Calu3 (cell line): ENCODE measurements at regions of chr12 and their contacts with region 1.

Region 1: DNA sequence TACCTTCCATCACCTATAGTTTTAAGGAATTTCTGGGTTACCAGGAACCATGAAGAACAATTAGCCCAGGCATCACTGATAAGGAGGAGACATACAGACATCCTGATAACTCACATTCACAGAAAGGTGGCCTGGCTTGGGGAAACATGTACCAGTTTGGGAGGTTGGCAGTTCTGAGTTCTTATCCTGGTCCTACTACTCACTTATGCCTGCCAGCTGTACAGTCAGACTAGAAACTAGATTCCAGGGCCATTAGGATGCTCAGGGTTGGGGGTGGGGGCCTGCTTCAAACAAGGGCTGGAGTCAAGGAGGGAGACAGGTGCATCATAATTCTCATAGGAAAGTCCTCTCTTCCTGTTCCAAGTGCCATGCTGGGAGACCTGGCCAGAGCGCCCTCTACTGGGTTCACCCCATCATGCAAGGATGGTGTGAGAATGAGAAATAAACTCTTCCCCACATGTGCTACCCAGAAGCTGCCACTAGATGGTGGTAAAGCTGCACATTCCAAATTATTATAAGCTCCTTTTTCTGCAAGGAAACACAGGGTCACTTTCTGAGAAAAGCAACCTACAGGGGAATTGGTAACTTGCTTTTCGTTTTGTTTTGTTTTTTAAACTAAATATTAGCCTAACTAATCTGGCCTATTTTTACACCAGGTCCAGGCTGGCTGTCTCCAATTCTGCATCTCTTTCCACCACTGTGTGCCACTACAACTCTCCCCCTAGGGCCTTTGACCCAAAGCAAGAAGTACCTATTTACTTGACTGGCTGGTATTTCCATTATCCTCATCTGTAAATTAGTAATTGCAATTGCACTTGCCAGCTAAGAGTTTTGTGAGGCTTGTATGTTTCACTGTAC is 14.5 kb downstream of the OAS2 start:
- DNase-seq: peak; percentile 67
- H3K4me3 Mint-ChIP-seq: no peak overlapping the region
- H3K27ac Mint-ChIP-seq: no peak overlapping the region
- H3K4me1 Mint-ChIP-seq: no peaks in the 10 kb centered on the region
- H3K27me3 Mint-ChIP-seq: peaks cover 20% of the 10 kb centered on the region
- CTCF ChIP-seq: peak; percentile 92

Region 2: GRCh38 chr12:112916270-112916669 is 76.5 kb before region 1 on chr12:
- CTCF ChIA-PET with region 1: no interaction called
- intact Hi-C with region 1: no loop called
- DNase-seq: no peak
- H3K4me3 Mint-ChIP-seq: no peak overlapping the region
- H3K27ac Mint-ChIP-seq: no peak overlapping the region
- H3K4me1 Mint-ChIP-seq: no peaks in the 10 kb centered on the region
- H3K27me3 Mint-ChIP-seq: no peaks in the 10 kb centered on the region
- CTCF ChIP-seq: no peak

Region 3: DNA sequence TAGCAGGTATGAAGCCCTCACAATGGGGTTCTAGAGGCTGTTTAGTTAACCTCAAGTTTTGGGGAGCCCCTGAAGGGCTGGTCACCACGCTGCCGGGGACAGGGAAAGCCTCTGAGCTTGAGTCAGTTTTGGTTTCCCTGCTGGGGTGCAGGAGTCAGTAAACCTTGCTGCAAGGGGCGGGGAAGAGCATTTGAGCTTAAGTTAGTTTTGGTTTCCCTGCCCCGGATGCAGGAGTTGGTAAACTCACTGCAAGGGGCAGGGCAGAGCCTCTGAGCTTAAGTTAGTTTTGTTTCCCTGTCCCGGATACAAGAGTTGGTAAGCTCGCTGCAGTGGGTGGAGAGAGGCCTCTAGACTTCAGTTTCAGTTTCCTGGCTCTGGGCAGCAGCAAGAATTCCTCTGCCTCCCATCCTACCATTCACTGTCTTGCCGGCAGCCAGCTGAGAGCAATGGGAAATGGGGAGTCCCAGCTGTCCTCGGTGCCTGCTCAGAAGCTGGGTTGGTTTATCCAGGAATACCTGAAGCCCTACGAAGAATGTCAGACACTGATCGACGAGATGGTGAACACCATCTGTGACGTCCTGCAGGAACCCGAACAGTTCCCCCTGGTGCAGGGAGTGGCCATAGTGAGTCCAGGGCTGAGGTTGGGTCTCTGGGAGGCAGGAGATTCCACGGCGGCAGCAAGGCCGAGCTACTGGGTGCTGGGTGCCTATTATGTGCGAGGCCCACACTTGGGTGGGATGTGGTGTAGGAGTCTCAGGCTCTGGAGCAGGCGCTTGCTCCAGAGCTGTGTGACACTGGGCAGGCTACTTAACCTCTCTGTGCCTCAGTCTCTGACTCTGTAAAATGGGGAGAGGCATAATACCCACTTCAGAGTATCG is 14.4 kb before region 1 on chr12 and contains the start of gene OAS2:
- CTCF ChIA-PET with region 1: interaction called, 16 read pairs
- intact Hi-C with region 1: no loop called
- DNase-seq: peak; percentile 67
- H3K4me3 Mint-ChIP-seq: peak within 1 kb of the TSS; percentile 73
- H3K27ac Mint-ChIP-seq: peak within 1 kb of the TSS; percentile 62
- H3K4me1 Mint-ChIP-seq: no peaks in the 10 kb centered on the region
- H3K27me3 Mint-ChIP-seq: no peaks in the 10 kb centered on the region
- CTCF ChIP-seq: no peak
- total RNA-seq, gene OAS2: 58.1 and 211 TPM in 2 replicates

Region 4: GRCh38 chr12:113030875-113031525 is 38.2 kb after region 1 on chr12:
- CTCF ChIA-PET with region 1: interaction called, 7 read pairs
- intact Hi-C with region 1: loop called (anchors 1 kb)
- DNase-seq: peak; percentile 43
- H3K4me3 Mint-ChIP-seq: no peak overlapping the region
- H3K27ac Mint-ChIP-seq: no peak overlapping the region
- H3K4me1 Mint-ChIP-seq: peaks cover 9% of the 10 kb centered on the region
- H3K27me3 Mint-ChIP-seq: peaks cover 53% of the 10 kb centered on the region
- CTCF ChIP-seq: peak; percentile 68

Region 5: GRCh38 chr12:113152835-113153814 is 160.4 kb after region 1 on chr12:
- CTCF ChIA-PET with region 1: interaction called, 4 read pairs
- intact Hi-C with region 1: loop called (anchors 5 kb)
- DNase-seq: peak; percentile 89
- H3K4me3 Mint-ChIP-seq: peak overlapping the region; percentile 98
- H3K27ac Mint-ChIP-seq: peak overlapping the region; percentile 13
- H3K4me1 Mint-ChIP-seq: peaks cover 30% of the 10 kb centered on the region
- H3K27me3 Mint-ChIP-seq: no peaks in the 10 kb centered on the region
- CTCF ChIP-seq: peak; percentile 25

Region 6: GRCh38 chr12:113261847-113262470 is 269.2 kb after region 1 on chr12:
- CTCF ChIA-PET with region 1: no interaction called
- intact Hi-C with region 1: no loop called
- DNase-seq: no peak
- H3K4me3 Mint-ChIP-seq: no peak overlapping the region
- H3K27ac Mint-ChIP-seq: no peak overlapping the region
- H3K4me1 Mint-ChIP-seq: peaks cover 12% of the 10 kb centered on the region
- H3K27me3 Mint-ChIP-seq: no peaks in the 10 kb centered on the region
- CTCF ChIP-seq: no peak